ENCODE measurements at regions of chr12 and their contacts with region 1.

Region 1: GRCh38 chr12:54368709-54369583 is 4.7 kb upstream of the GPR84 start:
- DNase-seq: peak; percentile 88
- ATAC-seq: peak; percentile 94
- H3K4me3 ChIP-seq: peak overlapping the region in 2 of 5 experiments; percentile 35 to 38
- H3K4me3 Mint-ChIP-seq: peak overlapping the region; percentile 69
- H3K27ac ChIP-seq: no peak overlapping the region
- H3K27ac Mint-ChIP-seq: peak overlapping the region; percentile 68
- H3K4me1 ChIP-seq: peaks cover 10 to 25% of the 10 kb centered on the region in 2 donors
- H3K4me1 Mint-ChIP-seq: peaks cover 21% of the 10 kb centered on the region
- H3K27me3 ChIP-seq: no peaks in the 10 kb centered on the region
- H3K27me3 Mint-ChIP-seq: no peaks in the 10 kb centered on the region
- CTCF ChIP-seq: peak; percentile 81

Region 2: GRCh38 chr12:53938326-53939140 is 430.4 kb before region 1 on chr12 and contains the start of gene HOXC13:
- CTCF ChIA-PET with region 1: no interaction called
- POLR2A ChIA-PET with region 1: no interaction called
- intact Hi-C with region 1: no loop called
- DNase-seq: no peak
- ATAC-seq: no peak
- H3K4me3 ChIP-seq: no peak within 1 kb of the TSS
- H3K4me3 Mint-ChIP-seq: no peak within 1 kb of the TSS
- H3K27ac ChIP-seq: no peak within 1 kb of the TSS
- H3K27ac Mint-ChIP-seq: no peak within 1 kb of the TSS
- H3K4me1 ChIP-seq: peaks cover 10 to 30% of the 10 kb centered on the region in 2 donors
- H3K4me1 Mint-ChIP-seq: peaks cover 10% of the 10 kb centered on the region
- H3K27me3 ChIP-seq: peaks cover 0 to 82% (median 73%) of the 10 kb centered on the region in 4 experiments
- H3K27me3 Mint-ChIP-seq: peaks cover 77% of the 10 kb centered on the region
- CTCF ChIP-seq: no peak
- total RNA-seq, gene HOXC13: not detected in 2 replicates

Region 3: DNA sequence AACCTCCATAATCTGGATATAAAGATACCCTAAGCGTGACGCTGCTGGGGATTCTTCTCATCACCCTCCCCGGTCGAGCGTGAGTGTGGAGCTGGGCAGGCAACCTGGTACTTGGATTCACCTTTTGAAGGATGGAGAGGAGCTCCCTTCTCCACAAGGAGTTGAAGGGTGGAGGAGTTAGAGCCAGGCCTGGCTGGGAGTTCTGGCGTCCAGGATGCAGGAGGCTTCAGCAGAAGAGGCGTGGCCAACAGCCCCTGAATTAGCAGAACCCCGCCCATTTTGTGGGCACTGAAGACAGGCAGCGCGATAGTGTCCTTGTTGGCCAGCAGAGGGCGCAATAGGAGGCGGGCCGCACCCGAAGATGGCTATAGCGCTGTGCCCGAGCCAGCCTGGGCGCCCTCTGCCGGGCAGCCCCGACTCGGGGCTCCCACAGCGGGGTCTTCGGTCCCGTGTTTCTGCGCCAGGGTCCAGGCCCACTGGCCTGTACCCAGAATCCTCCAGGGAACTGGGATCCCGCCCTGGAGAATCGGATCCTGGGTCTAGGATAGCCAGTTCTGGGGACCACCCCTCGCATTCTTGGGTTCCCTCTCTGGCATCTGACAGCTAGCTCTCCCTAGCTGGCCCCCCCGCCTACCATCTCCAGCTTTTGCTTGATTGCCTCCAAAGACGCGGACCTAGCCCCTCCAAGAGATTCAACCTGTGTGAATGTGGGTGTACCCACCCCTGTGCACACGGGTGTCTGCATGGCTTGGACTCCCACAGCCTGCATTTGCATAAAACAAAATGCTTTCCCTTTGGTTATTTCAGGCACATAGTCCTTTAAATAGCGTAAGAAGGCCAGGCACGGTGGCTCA is 154.2 kb before region 1 on chr12:
- CTCF ChIA-PET with region 1: interaction called, 31 read pairs
- POLR2A ChIA-PET with region 1: no interaction called
- intact Hi-C with region 1: no loop called
- DNase-seq: peak; percentile 95
- ATAC-seq: peak; percentile 83
- H3K4me3 ChIP-seq: peak overlapping the region; percentile 3 to 58 (median 46)
- H3K4me3 Mint-ChIP-seq: peak overlapping the region; percentile 90
- H3K27ac ChIP-seq: no peak overlapping the region
- H3K27ac Mint-ChIP-seq: peak overlapping the region; percentile 33
- H3K4me1 ChIP-seq: peaks cover 36 to 46% of the 10 kb centered on the region in 2 donors
- H3K4me1 Mint-ChIP-seq: peaks cover 44% of the 10 kb centered on the region
- H3K27me3 ChIP-seq: peaks cover 0 to 30% (median 6%) of the 10 kb centered on the region in 4 experiments
- H3K27me3 Mint-ChIP-seq: peaks cover 6% of the 10 kb centered on the region
- CTCF ChIP-seq: peak; percentile 100

Region 4: GRCh38 chr12:54251667-54252284 is 117.2 kb before region 1 on chr12:
- CTCF ChIA-PET with region 1: interaction called, 46 read pairs
- POLR2A ChIA-PET with region 1: interaction called, 5 read pairs
- intact Hi-C with region 1: loop called (anchors 1 kb)
- DNase-seq: peak; percentile 63
- ATAC-seq: peak; percentile 56
- H3K4me3 ChIP-seq: no peak overlapping the region
- H3K4me3 Mint-ChIP-seq: no peak overlapping the region
- H3K27ac ChIP-seq: no peak overlapping the region
- H3K27ac Mint-ChIP-seq: no peak overlapping the region
- H3K4me1 ChIP-seq: peaks cover 0 to 4% of the 10 kb centered on the region in 2 donors
- H3K4me1 Mint-ChIP-seq: peaks cover 6% of the 10 kb centered on the region
- H3K27me3 ChIP-seq: no peaks in the 10 kb centered on the region
- H3K27me3 Mint-ChIP-seq: no peaks in the 10 kb centered on the region
- CTCF ChIP-seq: peak; percentile 77

Region 5: DNA sequence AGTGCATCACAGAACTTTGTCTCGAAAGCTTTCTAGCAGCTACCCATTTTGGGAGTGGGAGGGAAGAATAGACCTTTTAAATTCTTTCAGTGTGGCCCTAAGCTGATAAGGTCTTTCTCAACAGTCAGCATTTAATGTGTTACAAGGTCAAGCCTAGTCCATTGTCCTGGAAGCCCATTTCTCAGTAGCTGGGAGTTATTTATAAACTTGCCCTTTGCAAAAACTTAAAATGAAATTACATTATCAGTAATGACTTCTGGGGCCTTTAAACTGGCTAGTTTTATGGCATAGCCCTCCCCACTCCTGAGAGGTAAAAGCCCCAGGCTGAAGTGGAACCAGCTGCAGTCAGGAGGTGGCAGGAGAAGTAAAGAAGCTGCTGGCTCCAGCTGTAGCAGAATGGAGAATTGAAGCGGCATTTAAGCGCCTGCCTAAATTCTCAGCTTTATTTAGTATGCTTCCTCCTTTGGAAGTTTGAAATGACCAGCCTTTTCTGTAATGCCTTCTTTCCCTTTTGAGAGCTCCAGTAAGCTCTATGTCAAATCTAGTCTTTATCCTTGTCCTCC is 31.6 kb before region 1 on chr12:
- CTCF ChIA-PET with region 1: interaction called, 9 read pairs
- POLR2A ChIA-PET with region 1: interaction called, 4 read pairs
- intact Hi-C with region 1: loop called (anchors 1 kb)
- DNase-seq: no peak
- ATAC-seq: no peak
- H3K4me3 ChIP-seq: no peak overlapping the region
- H3K4me3 Mint-ChIP-seq: no peak overlapping the region
- H3K27ac ChIP-seq: no peak overlapping the region
- H3K27ac Mint-ChIP-seq: no peak overlapping the region
- H3K4me1 ChIP-seq: no peaks in the 10 kb centered on the region
- H3K4me1 Mint-ChIP-seq: peaks cover 11% of the 10 kb centered on the region
- H3K27me3 ChIP-seq: no peaks in the 10 kb centered on the region
- H3K27me3 Mint-ChIP-seq: no peaks in the 10 kb centered on the region
- CTCF ChIP-seq: no peak

Region 6: DNA sequence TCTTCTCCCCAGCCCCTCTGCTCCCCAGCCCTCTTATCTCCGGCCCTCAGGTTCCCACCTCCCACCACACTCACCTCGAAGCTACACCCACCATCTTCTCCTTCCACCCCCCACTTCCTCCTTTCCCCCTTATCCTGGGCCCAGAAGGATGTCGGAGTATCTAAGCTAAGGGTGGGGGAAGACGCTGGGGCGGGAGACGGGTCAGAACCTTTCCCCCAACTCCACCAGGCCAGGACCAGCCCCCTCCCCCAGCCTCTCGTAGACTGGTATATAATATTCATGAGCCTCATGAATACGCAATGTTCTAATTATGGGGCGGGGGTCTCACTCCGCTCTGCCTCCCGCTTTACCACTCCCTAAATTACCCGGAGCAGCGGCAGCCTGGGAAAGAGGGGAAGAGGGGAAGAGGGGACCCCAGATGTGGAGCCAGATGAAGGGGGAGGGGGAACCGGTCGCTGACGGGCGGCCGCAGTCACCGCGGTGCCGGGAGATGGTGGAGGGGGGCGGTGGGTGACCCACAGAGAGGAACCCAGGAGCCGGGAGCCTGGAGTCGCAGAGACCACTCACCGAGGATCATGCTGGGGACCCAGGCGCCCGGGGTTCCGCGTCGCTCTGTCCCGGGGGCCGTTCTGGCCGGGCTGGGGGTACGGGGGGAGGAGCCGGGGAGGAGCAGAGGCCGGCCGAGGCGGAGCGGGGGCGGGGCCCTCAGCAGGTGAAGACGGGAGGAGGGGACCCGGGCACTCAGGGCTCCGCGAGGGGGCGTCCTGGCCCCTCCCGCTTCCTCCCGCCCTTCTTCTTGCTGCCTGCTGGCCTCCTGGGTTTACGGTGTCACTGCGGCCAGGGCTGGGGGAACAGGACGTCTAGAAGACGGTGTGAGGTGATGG is 22.0 kb after region 1 on chr12:
- CTCF ChIA-PET with region 1: interaction called, 10 read pairs
- POLR2A ChIA-PET with region 1: interaction called, 3 read pairs
- intact Hi-C with region 1: no loop called
- DNase-seq: peak; percentile 85
- ATAC-seq: peak; percentile 95
- H3K4me3 ChIP-seq: peak overlapping the region; percentile 30 to 74 (median 62)
- H3K4me3 Mint-ChIP-seq: peak overlapping the region; percentile 90
- H3K27ac ChIP-seq: peak overlapping the region; percentile 45 to 63
- H3K27ac Mint-ChIP-seq: peak overlapping the region; percentile 85
- H3K4me1 ChIP-seq: peaks cover 62 to 70% of the 10 kb centered on the region in 2 donors
- H3K4me1 Mint-ChIP-seq: peaks cover 63% of the 10 kb centered on the region
- H3K27me3 ChIP-seq: no peaks in the 10 kb centered on the region
- H3K27me3 Mint-ChIP-seq: no peaks in the 10 kb centered on the region
- CTCF ChIP-seq: no peak